ENCODE measurements at regions of chr12 and their contacts with region 1.

Region 1: DNA sequence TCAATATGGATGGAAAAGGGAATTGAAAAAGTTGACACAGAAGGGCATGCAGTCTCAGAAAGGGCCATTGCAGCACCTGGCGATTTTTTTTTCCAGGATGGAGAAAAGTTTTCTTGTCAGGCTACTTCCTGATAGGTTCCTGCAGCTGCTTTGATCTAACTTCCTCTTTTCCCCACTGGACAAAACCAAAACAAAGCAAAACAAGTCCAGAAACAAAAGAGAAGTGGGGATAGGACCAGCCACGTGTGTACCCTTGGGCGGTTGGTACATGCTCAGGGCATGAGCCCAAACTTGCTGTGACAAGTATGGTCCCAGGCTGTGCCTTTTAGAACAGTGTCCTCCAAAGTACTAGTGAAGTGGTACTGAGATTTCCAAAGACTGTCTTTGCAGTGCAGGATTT is 89.8 kb downstream of the CHST11 start:
- DNase-seq: no peak
- H3K4me3 ChIP-seq: no peak overlapping the region
- H3K27ac ChIP-seq: no peak overlapping the region
- H3K4me1 ChIP-seq: no peaks in the 10 kb centered on the region
- H3K27me3 ChIP-seq: no peaks in the 10 kb centered on the region
- CTCF ChIP-seq: no peak

Region 2: DNA sequence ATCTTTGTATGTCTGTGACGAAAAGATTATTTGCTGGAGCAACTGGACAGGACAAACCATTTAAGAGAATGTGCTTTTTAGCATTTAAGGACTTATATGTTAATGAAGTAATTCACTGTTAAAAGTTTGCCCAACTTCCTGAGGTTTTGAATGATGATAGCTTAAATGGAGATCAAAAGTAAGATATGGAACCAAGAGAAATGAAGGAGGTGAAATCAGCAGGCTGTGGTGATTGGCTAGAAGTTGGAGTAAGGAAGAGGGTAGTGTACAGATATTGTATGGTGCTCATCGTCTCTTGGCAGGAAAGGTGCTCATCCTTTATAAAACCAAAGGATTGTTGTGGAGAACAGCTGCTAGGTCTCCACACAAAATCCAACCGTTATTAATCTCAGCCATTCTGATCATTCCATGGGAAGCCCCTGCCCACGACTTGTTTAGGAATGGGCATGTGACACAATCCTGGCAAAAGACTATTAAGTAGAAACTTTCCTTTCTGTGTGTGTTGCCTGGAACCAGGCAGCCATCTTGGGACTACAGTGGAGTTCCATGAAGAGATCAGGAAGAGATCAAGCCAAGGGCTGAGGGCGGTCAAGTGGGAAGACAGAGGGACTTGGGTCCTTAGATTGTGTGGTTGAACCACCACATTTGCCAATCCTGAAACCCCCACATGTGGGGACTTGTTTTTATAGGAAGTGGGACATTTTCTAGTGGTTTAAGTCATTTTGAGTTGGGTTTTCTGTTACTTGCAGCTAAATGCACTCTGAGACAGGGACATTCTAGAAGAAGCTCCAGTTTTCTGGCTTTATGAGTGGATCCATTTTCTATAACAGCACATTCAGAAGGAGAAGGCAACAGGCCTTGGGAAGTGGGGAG is 146.6 kb before region 1 on chr12:
- intact Hi-C with region 1: loop called (anchors 10 kb)
- DNase-seq: no peak
- H3K4me3 ChIP-seq: no peak overlapping the region
- H3K27ac ChIP-seq: no peak overlapping the region
- H3K4me1 ChIP-seq: no peaks in the 10 kb centered on the region
- H3K27me3 ChIP-seq: no peaks in the 10 kb centered on the region
- CTCF ChIP-seq: no peak

Region 3: DNA sequence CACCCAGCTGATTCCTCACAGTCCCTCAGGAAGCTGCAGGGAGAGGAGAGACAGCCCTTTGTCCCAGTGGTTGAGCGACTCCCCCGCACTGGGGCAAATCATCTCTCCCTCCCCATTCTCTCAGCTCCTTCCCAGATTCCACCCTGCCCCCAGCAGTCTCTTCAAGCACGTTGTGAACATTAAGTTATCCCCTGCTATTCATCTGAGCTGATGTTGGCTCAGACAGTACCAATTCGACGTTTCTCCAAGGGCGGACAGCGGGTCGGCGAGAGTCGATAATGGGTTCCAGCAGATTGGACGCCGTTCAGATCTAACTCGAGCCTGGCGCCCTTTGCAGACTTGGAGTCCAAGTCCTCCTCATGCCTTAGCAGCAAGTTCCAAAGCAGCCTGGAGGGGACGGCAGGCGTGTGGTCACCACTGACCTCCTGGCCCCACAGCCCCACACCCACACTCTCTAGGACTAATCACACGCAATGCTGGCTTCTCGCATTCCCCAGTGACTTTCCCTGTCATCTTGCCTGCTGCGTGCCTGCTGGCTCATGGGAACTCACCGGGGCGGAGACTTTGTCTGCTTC is 156.1 kb after region 1 on chr12:
- intact Hi-C with region 1: no loop called
- DNase-seq: peak; percentile 16 to 84
- H3K4me3 ChIP-seq: peak overlapping the region in 1 of 2 donors; percentile 12
- H3K27ac ChIP-seq: peak overlapping the region; percentile 53 to 59
- H3K4me1 ChIP-seq: peaks cover 3 to 19% of the 10 kb centered on the region in 2 donors
- H3K27me3 ChIP-seq: no peaks in the 10 kb centered on the region
- CTCF ChIP-seq: no peak

Measured in ascending aorta (tissue), 2 donors.